ENCODE measurements at regions of chr10 and their contacts with region 1.

Region 1: DNA sequence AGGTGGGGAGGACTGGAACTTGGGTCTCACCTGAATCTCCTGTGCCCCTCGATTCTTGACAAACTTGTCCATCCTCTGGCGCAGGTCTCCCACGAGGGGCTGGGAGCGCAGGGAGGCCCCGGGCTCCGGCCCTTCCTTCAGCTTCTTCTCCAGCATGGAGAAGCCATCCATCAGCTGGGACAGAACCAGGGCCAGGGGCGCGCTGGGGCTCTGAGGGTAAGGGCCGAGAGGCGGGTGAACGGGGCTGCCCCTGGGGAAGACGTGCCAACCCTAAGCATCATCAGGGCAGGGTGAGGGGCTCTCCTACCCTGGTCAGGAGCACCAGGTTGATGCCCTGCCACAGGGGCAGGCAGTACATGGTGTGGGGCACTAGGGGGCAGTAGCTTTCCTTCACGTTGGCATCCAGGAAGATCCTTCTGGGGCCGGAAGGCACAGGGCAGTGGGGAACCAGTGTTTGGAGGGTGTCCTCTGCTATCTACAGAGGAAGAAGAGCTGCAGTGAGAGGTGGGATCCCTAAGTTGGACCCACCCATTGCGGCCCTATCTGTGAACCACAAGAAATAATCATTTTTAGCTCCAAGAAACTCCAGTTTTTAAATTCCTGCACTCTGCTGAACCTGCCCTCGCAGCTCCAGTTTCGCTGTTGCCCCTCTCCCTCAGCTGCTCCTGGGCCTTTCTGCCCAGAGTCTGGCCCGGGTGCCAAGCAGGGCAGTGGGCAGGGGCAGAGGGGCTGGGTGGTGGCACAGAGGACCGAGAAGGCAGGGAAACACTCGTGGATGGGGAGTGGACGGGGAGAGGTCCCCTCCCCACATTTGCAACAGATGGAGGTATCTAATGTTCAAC is 10.8 kb upstream of the PYROXD2 start:
- DNase-seq: peak in 1 of 2 experiments; percentile 87
- H3K4me3 ChIP-seq: no peak overlapping the region
- H3K27ac ChIP-seq: no peak overlapping the region
- H3K4me1 ChIP-seq: no peaks in the 10 kb centered on the region
- H3K27me3 ChIP-seq: no peaks in the 10 kb centered on the region
- CTCF ChIP-seq: peak; percentile 77 to 100 (median 96)
- EP300 ChIP-seq: no peak
- POLR2A ChIP-seq: no peak
- RAD21 ChIP-seq: peak; percentile 82

Region 2: DNA sequence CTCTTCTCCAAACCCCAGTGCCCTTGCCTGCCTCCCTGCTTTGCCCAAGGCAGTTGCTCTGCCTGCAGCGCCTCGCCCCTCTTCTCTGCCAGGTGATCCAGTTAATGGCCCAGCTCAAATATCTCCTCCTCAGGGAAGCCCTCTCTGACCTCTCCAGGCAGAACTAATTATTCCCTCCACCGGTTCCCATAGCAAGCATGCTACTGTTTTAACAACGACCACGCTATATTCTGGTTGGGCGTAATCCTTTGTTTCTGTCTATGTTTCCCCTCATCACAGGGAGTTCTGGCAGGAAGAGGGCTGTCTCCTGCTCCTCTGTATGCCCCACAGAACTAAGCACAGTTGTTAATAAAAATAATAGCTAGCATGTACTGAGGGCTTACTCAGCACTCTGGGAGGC is 328.1 kb before region 1 on chr10:
- CTCF ChIA-PET with region 1: no interaction called
- POLR2A ChIA-PET with region 1: no interaction called
- DNase-seq: no peak
- H3K4me3 ChIP-seq: no peak overlapping the region
- H3K27ac ChIP-seq: no peak overlapping the region
- H3K4me1 ChIP-seq: peaks cover 0 to 2% (median 1%) of the 10 kb centered on the region in 4 experiments; a peak in 1 of 7 replicates
- H3K27me3 ChIP-seq: no peaks in the 10 kb centered on the region
- CTCF ChIP-seq: no peak
- EP300 ChIP-seq: no peak
- POLR2A ChIP-seq: no peak
- RAD21 ChIP-seq: no peak

Region 3: GRCh38 chr10:98340261-98340939 is 85.3 kb before region 1 on chr10:
- CTCF ChIA-PET with region 1: interaction called, 10 read pairs
- POLR2A ChIA-PET with region 1: no interaction called
- DNase-seq: no peak
- H3K4me3 ChIP-seq: no peak overlapping the region
- H3K27ac ChIP-seq: no peak overlapping the region
- H3K4me1 ChIP-seq: no peaks in the 10 kb centered on the region
- H3K27me3 ChIP-seq: no peaks in the 10 kb centered on the region
- CTCF ChIP-seq: no peak
- EP300 ChIP-seq: no peak
- POLR2A ChIP-seq: no peak
- RAD21 ChIP-seq: no peak

Region 4: DNA sequence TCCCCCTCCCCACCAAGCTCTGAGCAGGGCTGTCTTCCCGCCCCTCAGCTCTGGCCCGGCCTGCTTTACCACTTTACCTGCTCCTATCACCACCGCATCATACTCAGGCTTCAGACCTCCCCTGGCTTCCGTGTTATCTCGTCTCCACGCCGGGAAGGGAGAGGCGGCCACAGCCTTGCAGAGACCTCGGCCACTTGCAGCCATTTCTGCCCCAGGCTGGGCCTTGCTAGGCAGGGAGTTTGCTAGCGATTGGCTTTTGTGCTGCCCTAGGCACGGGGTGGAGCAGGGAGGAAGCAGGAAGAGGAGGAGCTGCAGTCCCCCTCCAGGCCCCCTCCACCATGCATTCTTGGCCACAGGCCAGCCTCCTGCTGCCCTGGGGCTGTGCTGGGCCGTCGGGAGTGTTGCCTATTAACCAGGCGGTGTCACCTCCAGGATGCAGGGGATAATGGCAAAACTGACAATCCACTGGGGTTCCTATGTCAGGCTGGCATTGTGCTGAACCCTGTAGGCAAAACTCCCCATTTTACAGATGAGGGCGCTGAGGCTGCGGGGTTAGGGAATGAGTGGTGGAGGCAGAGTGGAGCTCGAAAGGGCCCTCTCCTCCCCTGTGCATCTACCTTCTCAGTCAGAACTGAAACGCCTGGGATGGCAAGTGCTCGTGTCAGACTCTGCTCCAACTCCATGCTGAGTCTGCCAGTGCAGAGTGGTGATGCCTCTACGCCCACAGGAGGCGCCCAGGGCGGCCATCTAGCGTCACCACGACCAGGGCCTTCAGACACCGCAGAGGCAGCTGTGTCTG is 10.6 kb before region 1 on chr10 and contains the start of gene PYROXD2:
- CTCF ChIA-PET with region 1: interaction called, 69 read pairs
- POLR2A ChIA-PET with region 1: interaction called, 11 read pairs
- DNase-seq: peak; percentile 73 to 81
- H3K4me3 ChIP-seq: peak within 1 kb of the TSS; percentile 14 to 59 (median 32)
- H3K27ac ChIP-seq: peak within 1 kb of the TSS; percentile 74
- H3K4me1 ChIP-seq: peaks cover 0 to 10% (median 3%) of the 10 kb centered on the region in 4 experiments; a peak in 6 of 7 replicates
- H3K27me3 ChIP-seq: no peaks in the 10 kb centered on the region
- CTCF ChIP-seq: no peak
- EP300 ChIP-seq: no peak
- POLR2A ChIP-seq: peak; percentile 77 to 87
- RAD21 ChIP-seq: 0 out of 4 replicates have a peak, but pooled peaks of 1 of the 2 experiments have one; percentile 9
- total RNA-seq, gene PYROXD2: 3.2 and 4.2 TPM in 2 replicates

Region 5: DNA sequence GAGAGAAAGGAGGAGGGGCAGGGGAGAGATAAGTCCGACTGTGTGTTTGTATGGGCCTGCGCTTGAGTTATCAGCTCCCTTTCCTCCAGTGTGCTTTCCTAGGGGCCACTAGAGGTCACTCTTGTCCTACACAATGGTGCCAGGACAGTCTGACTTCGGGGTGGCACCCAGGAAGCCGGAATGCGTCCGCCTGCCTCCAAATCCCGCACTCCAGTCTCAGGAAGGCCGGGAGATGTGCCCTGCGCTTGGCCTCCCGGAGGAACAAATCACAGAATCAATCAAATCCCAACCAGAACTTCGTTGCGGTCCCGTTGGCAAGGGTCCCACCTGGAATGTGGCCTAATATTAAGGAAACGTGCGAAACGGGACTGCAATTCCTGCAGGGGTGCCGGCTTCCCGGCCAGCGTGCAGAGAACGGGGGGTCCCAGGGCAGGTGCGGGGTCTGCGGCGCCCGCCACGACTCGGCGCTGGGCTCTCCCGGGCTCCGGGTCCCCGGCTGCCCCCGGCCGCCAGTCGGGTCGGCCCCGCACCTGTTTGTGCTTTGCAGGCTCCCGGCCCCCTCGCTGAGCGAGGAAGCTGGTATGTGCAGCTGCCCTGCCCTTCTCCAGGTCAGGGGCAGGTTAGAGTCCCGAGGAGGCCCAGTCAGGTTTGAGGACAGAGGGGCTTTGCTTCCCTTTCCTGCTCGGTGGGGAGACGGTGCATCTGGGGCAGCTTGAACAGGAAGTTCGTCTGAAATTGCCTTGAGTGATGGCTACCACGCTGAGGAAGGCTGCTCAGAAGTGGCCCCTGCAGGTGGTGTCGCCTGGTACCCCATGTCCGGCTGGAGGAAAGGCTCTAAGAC is 42.0 kb after region 1 on chr10:
- CTCF ChIA-PET with region 1: interaction called, 20 read pairs
- POLR2A ChIA-PET with region 1: no interaction called
- DNase-seq: peak; percentile 46 to 70
- H3K4me3 ChIP-seq: peak overlapping the region; percentile 5 to 54 (median 28); a peak in 7 of 8 replicates
- H3K27ac ChIP-seq: no peak overlapping the region
- H3K4me1 ChIP-seq: peaks cover 0 to 13% (median 2%) of the 10 kb centered on the region in 4 experiments; a peak in 4 of 7 replicates
- H3K27me3 ChIP-seq: peaks cover 0 to 4% (median 1%) of the 10 kb centered on the region in 4 experiments; a peak in 2 of 7 replicates
- CTCF ChIP-seq: peak; percentile 72 to 91 (median 83)
- EP300 ChIP-seq: no peak
- POLR2A ChIP-seq: no peak
- RAD21 ChIP-seq: peak; percentile 94 to 97